Activated CD4-positive, alpha-beta T cell treated with anti-CD3 and anti-CD28 coated beads for 36 hours (primary cell): ENCODE measurements at regions of chr15 and their contacts with region 1.

Region 1: GRCh38 chr15:31215490-31216214 is 111.0 kb upstream of the KLF13 start:
- DNase-seq: peak; percentile 93
- ATAC-seq: peak; percentile 89
- H3K4me3 Mint-ChIP-seq: peak overlapping the region; percentile 72
- H3K27ac Mint-ChIP-seq: peak overlapping the region; percentile 56
- H3K4me1 Mint-ChIP-seq: peaks cover 17% of the 10 kb centered on the region
- H3K27me3 Mint-ChIP-seq: no peaks in the 10 kb centered on the region

Region 2: GRCh38 chr15:31116423-31117030 is 99.1 kb before region 1 on chr15:
- CTCF ChIA-PET with region 1: no interaction called
- POLR2A ChIA-PET with region 1: no interaction called
- intact Hi-C with region 1: no loop called
- DNase-seq: no peak
- ATAC-seq: no peak
- H3K4me3 Mint-ChIP-seq: no peak overlapping the region
- H3K27ac Mint-ChIP-seq: no peak overlapping the region
- H3K4me1 Mint-ChIP-seq: no peaks in the 10 kb centered on the region
- H3K27me3 Mint-ChIP-seq: peaks cover 1% of the 10 kb centered on the region

Region 3: DNA sequence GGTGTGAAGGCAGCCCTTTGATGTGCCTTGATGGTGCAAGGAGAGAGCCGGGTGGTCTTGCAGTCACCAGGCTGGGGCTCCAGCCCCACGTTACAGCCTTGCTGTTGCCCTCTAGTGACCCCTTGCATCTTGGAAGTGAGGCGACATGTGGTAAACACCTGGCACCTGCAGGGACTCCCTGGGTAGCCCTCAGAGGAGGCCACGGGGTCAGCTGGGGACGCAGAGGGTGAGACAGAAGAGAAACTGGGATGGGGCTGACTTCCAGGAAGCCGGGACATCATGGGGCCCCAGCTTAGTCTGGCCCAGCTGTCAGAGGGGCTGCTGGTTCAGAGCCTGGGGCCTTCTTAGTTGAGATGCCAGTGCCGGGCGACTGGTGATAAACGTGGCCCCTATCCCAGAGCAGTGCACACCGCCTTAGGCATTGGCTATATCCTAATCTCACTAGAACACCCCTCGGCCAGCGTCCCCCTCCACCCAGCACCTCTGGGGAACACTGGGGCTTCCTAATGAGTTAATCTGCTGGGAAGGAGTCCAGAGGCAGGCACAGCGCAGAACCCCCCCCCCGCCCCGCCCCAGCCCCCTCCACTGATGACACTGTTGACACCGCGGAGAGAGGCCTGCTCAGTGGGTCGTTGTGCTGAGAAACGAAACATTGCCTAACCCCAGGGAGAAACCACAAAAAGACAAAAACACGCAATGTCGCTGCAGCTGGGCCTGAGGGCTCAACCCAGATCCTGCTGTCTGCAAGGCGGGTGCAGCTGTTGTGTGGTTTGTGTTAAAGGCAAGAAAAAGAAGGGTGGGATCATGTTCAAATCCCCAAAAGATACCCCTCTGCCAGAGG is 50.4 kb after region 1 on chr15:
- CTCF ChIA-PET with region 1: interaction called, 4 read pairs
- POLR2A ChIA-PET with region 1: no interaction called
- intact Hi-C with region 1: loop called in 1 of 2 experiments (anchors 5 kb)
- DNase-seq: peak; percentile 78
- ATAC-seq: peak; percentile 75
- H3K4me3 Mint-ChIP-seq: peak overlapping the region; percentile 11
- H3K27ac Mint-ChIP-seq: peak overlapping the region; percentile 77
- H3K4me1 Mint-ChIP-seq: peaks cover 78% of the 10 kb centered on the region
- H3K27me3 Mint-ChIP-seq: peaks cover 2% of the 10 kb centered on the region

Region 4: GRCh38 chr15:31391687-31392671 is 176.3 kb after region 1 on chr15:
- CTCF ChIA-PET with region 1: no interaction called
- POLR2A ChIA-PET with region 1: no interaction called
- intact Hi-C with region 1: loop called in 1 of 2 experiments (anchors 1 kb)
- DNase-seq: peak; percentile 90
- ATAC-seq: peak; percentile 92
- H3K4me3 Mint-ChIP-seq: peak overlapping the region; percentile 80
- H3K27ac Mint-ChIP-seq: peak overlapping the region; percentile 71
- H3K4me1 Mint-ChIP-seq: peaks cover 40% of the 10 kb centered on the region
- H3K27me3 Mint-ChIP-seq: no peaks in the 10 kb centered on the region